ENCODE measurements at regions of chr19 and their contacts with region 1.

Region 1: GRCh38 chr19:6218491-6219162 is 61.1 kb downstream of the MLLT1 start:
- DNase-seq: peak; percentile 70 to 99
- H3K4me3 ChIP-seq: no peak overlapping the region
- H3K27ac ChIP-seq: no peak overlapping the region
- H3K4me1 ChIP-seq: peaks cover 0 to 17% (median 6%) of the 10 kb centered on the region in 4 experiments; a peak in 5 of 7 replicates
- H3K27me3 ChIP-seq: no peaks in the 10 kb centered on the region; a peak in 1 of 7 replicates
- CTCF ChIP-seq: peak; percentile 88 to 99 (median 95)
- EP300 ChIP-seq: no peak
- POLR2A ChIP-seq: no peak
- RAD21 ChIP-seq: peak; percentile 83 to 87

Region 2: GRCh38 chr19:6201996-6202395 is 16.6 kb before region 1 on chr19:
- CTCF ChIA-PET with region 1: interaction called, 12 read pairs
- POLR2A ChIA-PET with region 1: interaction called, 4 read pairs
- DNase-seq: no peak
- H3K4me3 ChIP-seq: no peak overlapping the region
- H3K27ac ChIP-seq: no peak overlapping the region
- H3K4me1 ChIP-seq: peaks cover 0 to 6% (median 3%) of the 10 kb centered on the region in 4 experiments; a peak in 4 of 7 replicates
- H3K27me3 ChIP-seq: peaks cover 0 to 3% (median 3%) of the 10 kb centered on the region in 4 experiments; a peak in 3 of 7 replicates
- CTCF ChIP-seq: no peak
- EP300 ChIP-seq: no peak
- POLR2A ChIP-seq: no peak
- RAD21 ChIP-seq: no peak

Region 3: GRCh38 chr19:6238643-6239281 is 20.1 kb after region 1 on chr19:
- CTCF ChIA-PET with region 1: interaction called, 40 read pairs
- POLR2A ChIA-PET with region 1: interaction called, 4 read pairs
- DNase-seq: no peak
- H3K4me3 ChIP-seq: no peak overlapping the region
- H3K27ac ChIP-seq: no peak overlapping the region
- H3K4me1 ChIP-seq: peaks cover 0 to 12% (median 1%) of the 10 kb centered on the region in 4 experiments; a peak in 3 of 7 replicates
- H3K27me3 ChIP-seq: no peaks in the 10 kb centered on the region; a peak in 1 of 7 replicates
- CTCF ChIP-seq: no peak
- EP300 ChIP-seq: no peak
- POLR2A ChIP-seq: no peak
- RAD21 ChIP-seq: no peak

Region 4: DNA sequence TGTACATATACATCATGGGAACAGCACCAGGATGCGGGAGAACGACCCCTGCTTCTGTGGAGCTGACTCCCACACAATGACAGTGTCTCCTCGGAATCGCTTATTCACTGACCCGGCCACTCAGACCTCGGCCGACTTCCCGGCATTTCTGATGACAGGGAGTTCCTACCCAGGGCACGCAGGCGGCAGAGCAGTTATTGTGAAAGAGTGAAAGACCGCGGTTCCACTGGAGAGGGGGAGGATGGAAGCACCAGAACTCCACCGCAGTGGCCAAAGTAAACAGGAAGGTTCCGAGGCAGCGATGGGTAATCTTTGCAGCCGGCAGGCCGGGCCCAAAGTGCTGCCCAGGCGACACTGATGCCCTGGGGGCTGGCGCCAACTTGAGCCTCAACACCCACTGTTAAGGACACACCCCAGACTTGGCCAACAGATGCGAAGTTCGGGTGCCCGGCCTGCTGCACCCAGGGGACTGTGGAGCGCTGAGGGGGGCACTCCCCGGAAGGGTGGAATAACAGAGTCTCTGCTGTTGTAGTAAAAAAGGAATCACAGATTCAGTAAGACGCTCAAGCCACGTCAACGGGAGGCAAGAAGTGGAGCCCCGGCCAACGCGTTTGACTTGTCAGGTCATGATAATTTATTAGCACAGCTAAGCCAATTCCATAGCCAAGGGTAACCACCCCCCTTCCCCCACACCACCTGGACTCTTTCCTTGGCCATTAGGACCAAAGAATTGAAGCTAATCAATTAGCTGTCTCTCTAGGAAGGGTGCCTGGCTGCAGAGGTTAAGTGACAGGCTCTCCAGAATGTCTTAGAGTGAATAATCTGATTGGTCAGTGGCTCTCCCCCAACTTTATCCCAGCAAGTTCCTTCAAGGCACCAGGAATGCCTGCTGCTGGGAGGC is 55.3 kb after region 1 on chr19:
- CTCF ChIA-PET with region 1: interaction called, 22 read pairs
- POLR2A ChIA-PET with region 1: interaction called, 4 read pairs
- DNase-seq: no peak
- H3K4me3 ChIP-seq: no peak overlapping the region; a peak in 1 of 8 replicates
- H3K27ac ChIP-seq: no peak overlapping the region
- H3K4me1 ChIP-seq: peaks cover 6 to 49% (median 23%) of the 10 kb centered on the region in 4 experiments
- H3K27me3 ChIP-seq: no peaks in the 10 kb centered on the region; a peak in 1 of 7 replicates
- CTCF ChIP-seq: no peak
- EP300 ChIP-seq: no peak
- POLR2A ChIP-seq: no peak
- RAD21 ChIP-seq: no peak

Measured in H1 (cell line).